Activated T-helper 2 cell treated with anti-CD3 and anti-CD28 coated beads, Interferon-gamma antibody, Interleukin-2, Interleukin-4, amounts not matched to agents 10 μg/mL and 5 μg/mL and 100 μg/mL, durations not matched to agents 14 hours and 24 hours and 36 hours (primary cell): ENCODE measurements at regions of chr2 and their contacts with region 1.

Region 1: DNA sequence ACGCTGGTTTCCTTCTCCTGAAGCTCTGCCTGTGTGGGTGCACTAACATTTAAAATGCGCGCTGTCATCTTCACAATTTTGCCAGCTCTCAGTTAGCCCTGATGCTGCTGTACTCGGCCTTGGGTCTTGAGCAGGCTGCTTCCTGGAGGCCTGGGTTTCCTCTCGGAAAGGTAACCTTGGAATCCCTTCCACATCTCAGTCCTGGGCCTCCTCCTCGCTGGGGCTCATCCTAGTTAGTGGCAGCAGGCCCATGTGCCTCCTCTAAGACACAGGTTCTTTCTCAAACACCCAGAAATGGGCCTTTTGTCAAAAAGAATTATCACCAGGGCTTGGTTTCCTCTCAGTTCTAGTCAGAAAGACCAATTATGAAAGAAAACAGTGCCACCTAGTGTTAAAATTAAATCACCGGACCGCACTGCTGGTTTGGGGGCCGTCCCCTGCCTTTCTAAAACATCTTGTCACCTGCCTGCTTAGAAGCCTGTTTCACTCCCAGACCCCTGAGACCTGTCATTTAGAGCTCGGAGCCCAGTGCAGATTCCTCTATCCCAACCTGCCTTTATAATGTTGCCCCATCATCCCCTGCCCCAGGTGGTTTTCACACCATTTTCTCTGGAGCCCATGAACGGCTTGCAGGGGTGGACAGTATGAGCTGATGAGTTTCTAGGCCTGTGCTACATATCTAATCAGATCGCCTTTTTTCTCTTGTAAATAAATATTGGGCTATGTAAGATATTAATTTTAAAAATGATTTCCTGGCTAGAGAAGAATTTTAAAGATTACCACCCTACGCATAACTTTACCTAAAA is 42.4 kb downstream of the HK2 start:
- DNase-seq: peak; percentile 30
- H3K4me3 Mint-ChIP-seq: no peak overlapping the region
- H3K27ac Mint-ChIP-seq: peak overlapping the region; percentile 47
- H3K4me1 Mint-ChIP-seq: peaks cover 3% of the 10 kb centered on the region
- H3K27me3 Mint-ChIP-seq: no peaks in the 10 kb centered on the region

Region 2: GRCh38 chr2:74507145-74507925 is 368.9 kb before region 1 on chr2 and contains the start of gene PCGF1:
- intact Hi-C with region 1: no loop called
- DNase-seq: peak; percentile 96
- H3K4me3 Mint-ChIP-seq: peak within 1 kb of the TSS; percentile 97
- H3K27ac Mint-ChIP-seq: peak within 1 kb of the TSS; percentile 100
- H3K4me1 Mint-ChIP-seq: peaks cover 52% of the 10 kb centered on the region
- H3K27me3 Mint-ChIP-seq: peaks cover 24% of the 10 kb centered on the region
- total RNA-seq, gene PCGF1: 36.5 and 39.7 TPM in 2 replicates

Region 3: DNA sequence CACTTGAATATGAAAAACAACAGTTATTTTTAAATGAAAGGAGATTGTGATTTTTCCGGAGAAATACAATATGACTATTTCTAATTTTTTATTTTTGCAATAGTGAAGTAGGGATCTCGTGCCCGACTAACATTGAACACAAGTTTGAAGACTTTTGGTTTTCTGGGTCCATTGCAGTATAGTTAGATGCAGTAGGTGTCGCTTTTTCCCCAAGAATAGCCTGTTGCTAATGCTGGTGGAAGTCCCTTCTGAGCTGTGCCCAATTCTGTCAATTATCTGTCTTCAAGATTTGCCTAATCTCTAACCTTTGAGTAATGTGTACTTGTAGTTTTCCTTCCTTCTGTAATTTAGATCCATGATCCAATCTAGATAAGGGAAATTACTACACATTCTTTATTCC is 185.7 kb before region 1 on chr2:
- intact Hi-C with region 1: loop called (anchors 1 kb)
- DNase-seq: no peak
- H3K4me3 Mint-ChIP-seq: no peak overlapping the region
- H3K27ac Mint-ChIP-seq: no peak overlapping the region
- H3K4me1 Mint-ChIP-seq: no peaks in the 10 kb centered on the region
- H3K27me3 Mint-ChIP-seq: peaks cover 22% of the 10 kb centered on the region

Region 4: GRCh38 chr2:74715078-74715791 is 161.0 kb before region 1 on chr2:
- intact Hi-C with region 1: loop called (anchors 1 kb)
- DNase-seq: peak; percentile 75
- H3K4me3 Mint-ChIP-seq: peak overlapping the region; percentile 83
- H3K27ac Mint-ChIP-seq: no peak overlapping the region
- H3K4me1 Mint-ChIP-seq: peaks cover 8% of the 10 kb centered on the region
- H3K27me3 Mint-ChIP-seq: peaks cover 20% of the 10 kb centered on the region